Activated CD4-positive, alpha-beta T cell treated with anti-CD3 and anti-CD28 coated beads, Interleukin-2, amount 10 ng/mL, durations not matched to agents 24 days and 14 days (primary cell): ENCODE measurements at regions of chr6 and their contacts with region 1.

Region 1: DNA sequence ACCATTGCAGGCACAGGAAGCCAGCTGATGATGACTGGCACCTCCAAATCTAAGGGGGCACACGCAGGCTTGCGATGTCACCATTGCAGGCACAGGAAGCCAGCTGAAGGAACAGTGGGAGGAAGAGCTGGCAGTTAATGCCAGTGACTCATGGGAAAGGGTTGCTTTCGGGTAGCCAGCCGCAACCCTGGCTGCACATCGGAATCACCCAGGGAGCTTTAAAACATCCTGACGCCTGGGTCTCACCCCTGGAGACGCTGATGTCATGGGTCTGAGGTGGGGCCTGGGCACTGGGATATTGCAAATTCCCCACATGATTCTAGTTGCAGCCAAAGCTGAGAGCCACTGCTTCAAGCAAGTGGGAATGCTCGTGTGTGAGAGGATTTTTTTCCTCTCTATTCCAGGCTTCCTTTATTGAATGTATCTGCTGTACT is 16.1 kb upstream of the CCN6 start:
- DNase-seq: no peak
- H3K4me3 Mint-ChIP-seq: no peak overlapping the region
- H3K27ac Mint-ChIP-seq: peak overlapping the region; percentile 9
- H3K4me1 Mint-ChIP-seq: peaks cover 48% of the 10 kb centered on the region
- H3K27me3 Mint-ChIP-seq: no peaks in the 10 kb centered on the region

Region 2: DNA sequence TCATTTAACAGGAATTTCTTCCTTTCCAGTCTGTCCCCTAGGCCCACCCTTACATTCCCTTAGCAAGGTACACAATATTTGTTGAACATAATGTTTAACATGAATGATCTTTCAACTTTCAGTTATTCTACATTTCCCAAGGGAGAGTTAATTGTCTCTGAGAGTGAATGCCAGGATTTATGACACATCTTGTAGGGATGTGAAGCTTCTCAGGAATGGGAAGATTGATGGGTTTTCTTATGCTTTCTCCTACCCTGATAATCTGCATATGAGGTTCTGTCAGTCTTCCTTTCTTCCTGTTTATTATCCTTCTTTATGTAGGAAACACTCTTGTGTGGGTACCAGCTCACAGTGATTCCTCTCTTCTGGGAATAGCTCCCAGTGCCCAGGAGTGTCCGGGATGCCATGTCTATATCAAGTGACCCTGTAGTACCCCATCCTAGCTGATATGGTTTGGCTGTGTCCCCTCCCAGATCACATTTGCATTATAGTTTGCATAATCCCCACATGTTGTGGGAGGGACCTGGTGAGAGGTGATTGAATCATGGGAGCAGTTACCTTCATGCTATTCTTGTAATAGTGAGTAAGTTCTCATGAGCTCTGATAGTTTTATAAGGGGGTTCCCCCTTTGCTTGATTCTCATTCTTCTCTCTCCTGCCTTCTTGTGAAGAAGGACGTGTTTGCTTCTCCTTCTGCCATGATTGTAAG is 157.5 kb before region 1 on chr6:
- intact Hi-C with region 1: no loop called
- DNase-seq: no peak
- H3K4me3 Mint-ChIP-seq: no peak overlapping the region
- H3K27ac Mint-ChIP-seq: no peak overlapping the region
- H3K4me1 Mint-ChIP-seq: no peaks in the 10 kb centered on the region
- H3K27me3 Mint-ChIP-seq: peaks cover 2% of the 10 kb centered on the region

Region 3: DNA sequence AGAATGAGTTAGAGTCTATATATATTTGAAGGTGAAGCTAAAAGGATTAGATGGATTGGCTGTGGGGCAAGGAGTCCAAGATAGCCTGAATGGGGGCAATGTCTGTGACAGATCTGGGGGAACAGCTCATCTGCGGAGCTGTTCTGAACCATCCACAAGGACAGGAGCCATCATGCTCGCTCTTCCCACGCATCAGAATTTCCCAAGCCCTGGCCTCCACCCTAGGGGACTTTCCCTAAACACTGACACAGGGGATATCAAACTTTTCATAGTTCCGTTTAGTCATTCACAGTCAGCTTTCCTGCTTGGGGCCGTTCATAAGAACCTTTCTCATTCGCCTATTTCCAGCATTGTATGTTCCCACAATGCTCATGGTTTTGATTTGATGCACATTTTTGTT is 21.5 kb before region 1 on chr6:
- intact Hi-C with region 1: loop called (anchors 1 kb)
- DNase-seq: peak; percentile 71
- H3K4me3 Mint-ChIP-seq: peak overlapping the region; percentile 33
- H3K27ac Mint-ChIP-seq: peak overlapping the region; percentile 90
- H3K4me1 Mint-ChIP-seq: peaks cover 52% of the 10 kb centered on the region
- H3K27me3 Mint-ChIP-seq: no peaks in the 10 kb centered on the region